A673 (cell line): ENCODE measurements at regions of chr17 and their contacts with region 1.

Region 1: DNA sequence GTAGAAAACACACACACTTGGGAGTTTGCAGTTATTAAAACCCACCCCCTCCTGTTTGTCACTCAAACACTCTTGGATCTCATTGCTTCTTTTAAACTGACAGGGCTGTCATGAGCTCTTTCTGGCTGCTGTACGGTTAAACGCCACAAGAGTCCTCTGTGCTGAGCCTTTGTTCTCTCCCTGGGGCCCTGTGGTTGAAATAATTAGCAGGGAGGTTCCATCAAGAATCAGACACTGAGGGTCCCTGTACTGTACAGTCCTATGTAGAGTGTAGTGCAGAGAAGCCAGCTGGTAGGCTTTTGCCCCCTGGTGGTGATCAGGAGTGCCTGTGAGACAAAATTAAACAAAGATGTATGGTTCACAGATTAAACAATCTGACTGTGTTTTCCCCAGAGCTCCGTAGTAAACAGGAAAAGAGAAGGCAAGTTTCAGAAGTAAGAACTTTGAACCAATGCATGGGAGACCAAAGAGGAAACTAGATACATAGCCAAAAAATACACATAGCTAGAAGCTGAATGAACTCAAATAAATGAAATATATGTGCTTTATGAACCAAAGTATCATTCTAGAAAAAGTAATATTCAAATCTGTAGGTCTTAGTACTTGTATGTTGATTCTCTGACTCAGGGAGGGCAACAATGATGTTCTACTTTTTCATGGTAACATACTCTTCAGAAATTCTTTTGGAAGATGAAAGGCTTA is 1.4 kb upstream of the SSH2 start:
- DNase-seq: peak; percentile 99
- H3K4me3 ChIP-seq: peak overlapping the region; percentile 80
- H3K27ac ChIP-seq: peak overlapping the region; percentile 88
- H3K4me1 ChIP-seq: peaks cover 31% of the 10 kb centered on the region
- H3K27me3 ChIP-seq: no peaks in the 10 kb centered on the region
- CTCF ChIP-seq: peak; percentile 98

Region 2: DNA sequence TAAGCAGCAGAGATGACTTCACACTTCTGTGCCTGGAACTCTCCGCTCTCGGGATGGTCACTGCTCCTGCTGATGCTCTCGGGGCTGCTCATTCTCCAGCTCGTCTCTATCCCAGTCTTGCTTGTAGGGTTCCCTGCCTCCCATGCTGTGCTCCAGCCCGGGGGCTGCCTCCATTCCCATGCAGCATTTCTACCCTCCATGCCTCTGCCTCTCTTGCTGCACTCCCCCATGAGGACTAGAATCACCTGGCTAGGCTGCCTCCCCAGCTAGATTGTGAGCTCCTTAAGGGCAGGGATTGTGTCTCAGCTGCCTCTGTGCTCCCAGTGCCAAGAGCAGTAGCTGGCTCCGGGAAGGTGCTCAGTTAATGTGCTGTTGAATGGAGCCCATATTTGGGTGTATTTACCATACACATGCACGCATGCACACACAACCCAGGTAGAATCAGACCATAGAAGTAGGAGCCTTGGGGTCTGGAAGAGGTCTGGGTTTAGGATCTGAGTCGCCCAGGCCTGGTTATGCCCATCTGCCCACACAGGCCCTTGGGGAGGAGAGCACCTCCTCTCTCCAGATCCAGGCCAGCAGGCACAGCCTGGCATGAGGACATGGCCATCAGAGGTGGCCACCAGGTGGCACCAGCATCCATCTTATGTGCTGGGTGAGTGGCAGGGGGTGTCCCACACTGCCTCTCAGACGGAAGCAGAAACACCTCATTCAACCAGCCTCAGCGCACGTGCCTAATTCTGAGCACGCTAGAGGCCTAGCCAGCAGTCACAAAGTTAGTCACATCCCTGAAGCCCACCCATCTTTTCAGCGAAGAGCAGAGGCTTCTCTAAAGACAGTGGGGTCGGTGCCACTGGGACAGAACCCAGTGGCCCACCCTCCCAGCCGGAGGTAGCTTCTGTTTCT is 351.3 kb before region 1 on chr17:
- CTCF ChIA-PET with region 1: interaction called, 4 read pairs
- POLR2A ChIA-PET with region 1: no interaction called
- intact Hi-C with region 1: loop called (anchors 5 kb)
- DNase-seq: peak; percentile 91
- H3K4me3 ChIP-seq: no peak overlapping the region
- H3K27ac ChIP-seq: no peak overlapping the region
- H3K4me1 ChIP-seq: peaks cover 12% of the 10 kb centered on the region
- H3K27me3 ChIP-seq: no peaks in the 10 kb centered on the region
- CTCF ChIP-seq: peak; percentile 93

Region 3: DNA sequence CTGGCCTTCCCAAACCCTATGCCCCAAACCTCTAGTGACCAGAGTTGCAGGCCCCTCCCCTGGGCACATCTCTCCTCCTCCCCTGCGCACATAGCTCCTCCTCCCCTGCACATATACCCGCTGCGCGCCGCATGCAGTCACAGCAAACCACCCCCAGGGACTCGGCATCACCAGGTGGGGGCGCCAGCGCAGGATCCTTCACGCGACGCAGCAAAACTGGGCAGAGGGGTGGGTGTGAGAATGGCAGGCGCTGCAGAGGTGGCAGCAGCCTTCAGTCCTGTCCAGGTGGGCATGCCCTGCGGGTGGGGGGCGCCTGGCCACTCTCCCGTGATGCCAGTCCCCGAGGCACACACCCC is 314.3 kb before region 1 on chr17:
- CTCF ChIA-PET with region 1: interaction called, 20 read pairs
- POLR2A ChIA-PET with region 1: no interaction called
- intact Hi-C with region 1: loop called (anchors 5 kb)
- DNase-seq: peak; percentile 93
- H3K4me3 ChIP-seq: no peak overlapping the region
- H3K27ac ChIP-seq: no peak overlapping the region
- H3K4me1 ChIP-seq: peaks cover 47% of the 10 kb centered on the region
- H3K27me3 ChIP-seq: no peaks in the 10 kb centered on the region
- CTCF ChIP-seq: peak; percentile 96

Region 4: DNA sequence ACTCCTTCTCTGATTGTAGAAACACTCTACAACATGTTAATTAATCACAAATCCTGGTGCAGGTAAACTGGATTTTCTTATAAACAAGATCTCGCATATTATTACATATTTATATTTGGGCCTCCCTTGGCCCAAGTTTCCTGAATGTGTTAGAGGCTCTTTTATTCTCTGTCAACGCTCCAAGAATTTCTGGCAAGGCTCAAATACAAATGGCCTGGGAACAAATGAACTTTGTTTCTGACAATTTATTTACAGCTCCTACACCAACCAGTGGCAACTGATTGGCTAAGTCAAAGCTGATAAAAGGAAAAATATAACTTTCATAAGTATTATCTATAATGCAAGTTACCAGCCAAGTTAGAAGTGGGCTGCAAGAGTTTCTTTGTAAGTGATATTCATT is 243.8 kb before region 1 on chr17:
- CTCF ChIA-PET with region 1: no interaction called
- POLR2A ChIA-PET with region 1: interaction called, 13 read pairs
- intact Hi-C with region 1: no loop called
- DNase-seq: no peak
- H3K4me3 ChIP-seq: no peak overlapping the region
- H3K27ac ChIP-seq: peak overlapping the region; percentile 40
- H3K4me1 ChIP-seq: peaks cover 50% of the 10 kb centered on the region
- H3K27me3 ChIP-seq: no peaks in the 10 kb centered on the region
- CTCF ChIP-seq: no peak

Region 5: GRCh38 chr17:29807520-29808351 is 123.6 kb before region 1 on chr17:
- CTCF ChIA-PET with region 1: interaction called, 48 read pairs
- POLR2A ChIA-PET with region 1: no interaction called
- intact Hi-C with region 1: loop called (anchors 1 kb)
- DNase-seq: peak; percentile 81
- H3K4me3 ChIP-seq: no peak overlapping the region
- H3K27ac ChIP-seq: no peak overlapping the region
- H3K4me1 ChIP-seq: no peaks in the 10 kb centered on the region
- H3K27me3 ChIP-seq: no peaks in the 10 kb centered on the region
- CTCF ChIP-seq: peak; percentile 84

Region 6: GRCh38 chr17:29867643-29868181 is 63.7 kb before region 1 on chr17:
- CTCF ChIA-PET with region 1: interaction called, 14 read pairs
- POLR2A ChIA-PET with region 1: interaction called, 5 read pairs
- intact Hi-C with region 1: no loop called
- DNase-seq: no peak
- H3K4me3 ChIP-seq: no peak overlapping the region
- H3K27ac ChIP-seq: no peak overlapping the region
- H3K4me1 ChIP-seq: peaks cover 54% of the 10 kb centered on the region
- H3K27me3 ChIP-seq: no peaks in the 10 kb centered on the region
- CTCF ChIP-seq: peak; percentile 48

Region 7: GRCh38 chr17:29880031-29880430 is 51.4 kb before region 1 on chr17:
- CTCF ChIA-PET with region 1: no interaction called
- POLR2A ChIA-PET with region 1: no interaction called
- intact Hi-C with region 1: no loop called
- DNase-seq: no peak
- H3K4me3 ChIP-seq: no peak overlapping the region
- H3K27ac ChIP-seq: no peak overlapping the region
- H3K4me1 ChIP-seq: peaks cover 36% of the 10 kb centered on the region
- H3K27me3 ChIP-seq: no peaks in the 10 kb centered on the region
- CTCF ChIP-seq: no peak

Region 8: DNA sequence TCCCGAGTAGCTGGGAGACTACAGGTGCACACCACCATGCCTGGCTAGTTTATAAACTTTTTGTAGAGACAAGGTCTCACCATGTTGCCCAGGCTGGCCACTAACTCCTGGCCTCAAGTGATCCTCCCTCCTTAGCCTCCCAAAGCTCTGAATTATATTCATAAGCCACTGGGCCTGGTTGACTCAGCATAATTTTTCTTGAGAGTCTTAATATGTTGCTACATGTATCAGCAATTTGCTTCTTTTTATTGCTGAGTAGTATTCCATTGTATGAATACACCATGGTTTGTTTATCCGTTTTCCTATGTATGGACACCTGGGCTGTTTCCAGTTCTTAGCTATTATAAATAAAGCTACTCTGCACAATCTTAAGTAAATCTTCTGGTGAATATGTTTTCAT is 142.9 kb after region 1 on chr17:
- CTCF ChIA-PET with region 1: no interaction called
- POLR2A ChIA-PET with region 1: interaction called, 14 read pairs
- intact Hi-C with region 1: no loop called
- DNase-seq: no peak
- H3K4me3 ChIP-seq: no peak overlapping the region
- H3K27ac ChIP-seq: no peak overlapping the region
- H3K4me1 ChIP-seq: no peaks in the 10 kb centered on the region
- H3K27me3 ChIP-seq: no peaks in the 10 kb centered on the region
- CTCF ChIP-seq: no peak

Region 9: DNA sequence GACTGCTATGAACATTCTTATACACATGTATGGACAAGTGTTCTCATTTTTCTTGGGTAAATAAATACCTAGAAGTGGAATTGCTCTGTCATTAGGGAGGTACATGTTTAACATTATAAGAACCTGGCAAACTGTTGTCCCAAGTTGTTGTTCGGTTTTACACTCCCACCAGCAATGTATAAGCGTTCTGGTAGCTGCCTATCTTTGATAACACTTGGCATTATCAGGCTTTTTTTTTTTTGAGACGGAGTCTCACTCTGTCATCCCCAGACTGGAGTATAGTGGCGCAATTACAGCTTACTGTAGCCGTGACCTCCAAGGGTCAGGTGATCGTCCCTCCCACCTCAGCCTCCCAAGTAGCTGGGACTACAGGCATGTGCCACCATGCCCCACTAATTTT is 916.6 kb after region 1 on chr17:
- CTCF ChIA-PET with region 1: no interaction called
- POLR2A ChIA-PET with region 1: no interaction called
- intact Hi-C with region 1: no loop called
- DNase-seq: no peak
- H3K4me3 ChIP-seq: no peak overlapping the region
- H3K27ac ChIP-seq: no peak overlapping the region
- H3K4me1 ChIP-seq: no peaks in the 10 kb centered on the region
- H3K27me3 ChIP-seq: no peaks in the 10 kb centered on the region
- CTCF ChIP-seq: no peak